Spleen (tissue), 13 donors: ENCODE measurements at regions of chr6 and their contacts with region 1.

Region 1: GRCh38 chr6:110671116-110671846 is 144.0 kb downstream of the CDK19 start:
- DNase-seq: no peak
- H3K4me3 ChIP-seq: no peak overlapping the region
- H3K27ac ChIP-seq: no peak overlapping the region
- H3K4me1 ChIP-seq: no peaks in the 10 kb centered on the region
- H3K27me3 ChIP-seq: no peaks in the 10 kb centered on the region
- CTCF ChIP-seq: no peak
- POLR2A ChIP-seq: no peak

Region 2: GRCh38 chr6:110543106-110543505 is 128.2 kb before region 1 on chr6:
- intact Hi-C with region 1: loop called (anchors 10 kb)
- DNase-seq: no peak
- H3K4me3 ChIP-seq: no peak overlapping the region
- H3K27ac ChIP-seq: no peak overlapping the region
- H3K4me1 ChIP-seq: peaks cover 0 to 13% (median 0%) of the 10 kb centered on the region in 6 donors
- H3K27me3 ChIP-seq: no peaks in the 10 kb centered on the region
- CTCF ChIP-seq: no peak
- POLR2A ChIP-seq: no peak

Region 3: DNA sequence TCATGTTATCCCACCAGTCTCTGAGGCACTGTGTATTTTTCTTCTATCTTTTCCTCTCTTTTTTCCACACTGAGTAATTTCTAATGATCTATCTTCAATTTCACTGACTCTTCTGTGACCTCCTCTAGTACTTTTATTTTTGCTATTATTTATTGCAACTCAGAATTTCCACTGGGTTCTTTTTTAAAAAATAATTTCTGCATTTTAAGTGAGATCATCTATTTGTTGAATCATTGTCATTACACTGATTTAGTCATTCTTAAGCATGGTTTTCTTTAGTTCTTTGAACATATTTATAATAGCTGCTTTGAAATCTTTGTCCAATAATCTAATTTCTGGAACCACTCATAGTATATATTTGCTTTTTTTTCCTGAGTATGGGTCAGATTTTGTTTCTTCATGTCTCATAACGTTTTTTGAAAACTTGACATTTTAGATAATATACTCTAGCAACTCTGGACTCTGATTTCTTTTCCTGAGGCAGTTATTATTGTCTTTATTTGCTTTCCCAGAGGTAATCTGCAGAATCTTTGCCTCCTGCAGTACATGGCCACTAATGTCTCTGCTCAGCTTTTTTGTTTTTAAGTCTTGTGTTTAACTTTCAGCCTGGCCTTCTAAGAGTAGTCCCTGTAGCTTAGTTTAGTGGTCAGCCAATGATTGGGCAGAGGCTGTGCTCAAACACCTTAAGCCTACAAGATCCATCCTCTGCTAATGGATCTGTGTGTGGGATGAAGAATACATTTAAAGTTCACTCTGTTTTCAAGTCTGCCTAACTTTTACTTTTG is 98.0 kb before region 1 on chr6:
- intact Hi-C with region 1: no loop called
- DNase-seq: no peak
- H3K4me3 ChIP-seq: no peak overlapping the region
- H3K27ac ChIP-seq: no peak overlapping the region
- H3K4me1 ChIP-seq: peaks cover 0 to 2% (median 0%) of the 10 kb centered on the region in 6 donors
- H3K27me3 ChIP-seq: no peaks in the 10 kb centered on the region
- CTCF ChIP-seq: no peak
- POLR2A ChIP-seq: no peak

Region 4: DNA sequence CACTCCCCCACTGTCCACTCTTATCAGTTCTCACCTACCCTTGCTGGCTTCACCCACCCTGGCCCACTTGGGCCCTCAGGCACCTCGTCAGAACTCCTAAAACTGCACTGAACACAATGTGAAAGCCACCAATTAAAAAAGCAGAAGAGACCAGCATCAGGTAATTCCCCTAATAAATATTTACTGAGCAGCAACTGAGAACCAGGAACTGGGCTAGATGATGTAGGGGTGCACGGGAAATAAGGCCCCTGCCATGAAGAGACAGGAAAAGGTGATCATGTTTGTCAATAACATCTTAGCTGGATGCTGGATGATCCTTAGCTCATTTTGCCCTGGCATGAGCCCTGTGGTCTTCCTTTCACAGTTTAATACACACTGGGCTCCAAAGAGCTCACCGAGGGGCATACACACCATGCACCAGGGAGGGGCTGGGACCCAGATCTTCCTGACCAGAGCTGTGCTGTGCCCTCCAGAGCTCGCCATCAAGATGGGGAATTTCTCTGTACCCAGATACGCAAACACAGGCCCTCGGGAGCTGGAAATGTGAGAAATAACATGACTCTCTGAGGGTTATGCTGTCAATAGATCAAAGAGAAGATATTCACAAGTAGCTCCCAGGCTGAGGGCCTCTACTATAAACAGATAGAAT is 81.3 kb before region 1 on chr6:
- intact Hi-C with region 1: no loop called
- DNase-seq: no peak
- H3K4me3 ChIP-seq: no peak overlapping the region
- H3K27ac ChIP-seq: peak overlapping the region in 5 of 8 donors; percentile 24 to 71 (median 51)
- H3K4me1 ChIP-seq: peaks cover 0 to 14% (median 3%) of the 10 kb centered on the region in 6 donors
- H3K27me3 ChIP-seq: no peaks in the 10 kb centered on the region
- CTCF ChIP-seq: no peak
- POLR2A ChIP-seq: no peak